ENCODE measurements at regions of chr7 and their contacts with region 1.

Region 1: DNA sequence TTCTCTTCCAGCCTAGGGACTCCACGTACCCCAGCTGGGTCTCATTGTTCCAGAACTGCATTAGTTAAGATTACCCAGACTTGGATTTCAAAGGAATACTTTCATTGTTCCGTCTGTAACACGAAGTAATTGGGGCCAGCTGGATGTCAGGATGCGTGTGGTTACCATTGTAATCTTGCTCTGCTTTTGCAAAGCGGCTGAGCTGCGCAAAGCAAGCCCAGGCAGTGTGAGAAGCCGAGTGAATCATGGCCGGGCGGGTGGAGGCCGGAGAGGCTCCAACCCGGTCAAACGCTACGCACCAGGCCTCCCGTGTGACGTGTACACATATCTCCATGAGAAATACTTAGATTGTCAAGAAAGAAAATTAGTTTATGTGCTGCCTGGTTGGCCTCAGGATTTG is 21.0 kb downstream of the LRRC17 start:
- DNase-seq: peak; percentile 76
- ATAC-seq: peak; percentile 98

Region 2: DNA sequence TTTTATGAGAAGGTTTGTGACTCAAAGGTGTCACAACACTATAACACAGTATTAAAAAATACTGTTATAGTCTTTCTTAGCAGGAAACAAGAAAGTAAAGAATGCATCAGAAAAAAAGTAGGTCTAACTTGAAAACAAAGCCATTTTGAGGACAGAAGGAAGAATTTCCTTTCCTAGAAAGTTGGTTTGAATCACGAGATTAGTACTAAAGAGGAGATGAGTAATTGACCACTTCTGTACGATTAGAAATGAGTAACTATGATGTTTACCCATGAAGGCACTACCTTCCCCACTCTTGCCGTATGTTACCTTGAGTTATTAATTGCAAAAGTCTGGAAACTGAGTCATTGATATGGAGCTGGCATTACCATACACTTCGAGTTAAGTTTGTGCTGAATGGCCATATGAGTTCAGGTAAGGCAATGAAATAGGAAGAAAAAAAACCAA is 119.7 kb before region 1 on chr7:
- intact Hi-C with region 1: no loop called
- DNase-seq: no peak
- ATAC-seq: no peak

Region 3: DNA sequence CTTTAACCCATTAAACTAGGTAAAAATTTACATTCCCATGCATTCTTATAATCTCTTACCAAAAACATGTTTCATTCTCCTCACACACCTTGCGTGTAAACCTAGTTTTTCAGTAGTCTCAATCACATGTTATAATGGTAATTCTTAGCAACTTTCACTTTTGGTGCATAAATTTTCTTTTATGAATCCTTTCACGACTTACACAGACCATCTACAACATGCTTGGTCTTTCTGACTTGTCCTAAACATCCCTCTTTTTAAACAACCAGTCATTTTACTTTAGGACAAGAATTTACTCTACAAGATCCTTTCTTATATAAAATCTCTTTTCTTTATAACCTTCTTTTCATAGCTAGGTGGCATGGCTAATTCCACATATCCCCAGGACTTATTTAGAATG is 115.1 kb after region 1 on chr7:
- intact Hi-C with region 1: no loop called
- DNase-seq: no peak
- ATAC-seq: no peak

Region 4: DNA sequence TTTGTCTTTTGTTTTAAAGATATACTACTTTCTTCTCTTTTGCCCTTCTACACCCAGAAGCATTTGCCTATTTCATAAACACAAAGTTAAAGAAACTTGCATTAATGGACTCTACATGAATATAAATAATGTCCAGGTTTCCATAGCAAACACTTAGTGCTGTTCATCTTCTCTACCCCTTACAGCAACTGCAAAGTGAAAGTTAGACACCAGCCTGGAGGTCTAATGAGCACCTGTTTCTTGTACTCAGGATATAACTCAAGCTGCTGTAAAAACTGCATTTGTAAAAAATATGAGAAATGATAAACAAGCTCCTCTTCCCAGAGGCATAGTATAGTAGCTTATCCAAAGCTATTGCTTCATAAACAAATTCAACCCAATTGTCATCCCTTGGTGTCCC is 1131.7 kb after region 1 on chr7:
- intact Hi-C with region 1: loop called (anchors 5 kb)
- DNase-seq: no peak
- ATAC-seq: no peak